BJ (cell line): ENCODE measurements at regions of chr2 and their contacts with region 1.

Region 1: GRCh38 chr2:75608684-75609333 is 37.8 kb upstream of the MRPL19 start:
- DNase-seq: no peak
- H3K4me3 ChIP-seq: no peak overlapping the region
- H3K27me3 ChIP-seq: peaks cover 1% of the 10 kb centered on the region
- CTCF ChIP-seq: peak; percentile 99

Region 2: DNA sequence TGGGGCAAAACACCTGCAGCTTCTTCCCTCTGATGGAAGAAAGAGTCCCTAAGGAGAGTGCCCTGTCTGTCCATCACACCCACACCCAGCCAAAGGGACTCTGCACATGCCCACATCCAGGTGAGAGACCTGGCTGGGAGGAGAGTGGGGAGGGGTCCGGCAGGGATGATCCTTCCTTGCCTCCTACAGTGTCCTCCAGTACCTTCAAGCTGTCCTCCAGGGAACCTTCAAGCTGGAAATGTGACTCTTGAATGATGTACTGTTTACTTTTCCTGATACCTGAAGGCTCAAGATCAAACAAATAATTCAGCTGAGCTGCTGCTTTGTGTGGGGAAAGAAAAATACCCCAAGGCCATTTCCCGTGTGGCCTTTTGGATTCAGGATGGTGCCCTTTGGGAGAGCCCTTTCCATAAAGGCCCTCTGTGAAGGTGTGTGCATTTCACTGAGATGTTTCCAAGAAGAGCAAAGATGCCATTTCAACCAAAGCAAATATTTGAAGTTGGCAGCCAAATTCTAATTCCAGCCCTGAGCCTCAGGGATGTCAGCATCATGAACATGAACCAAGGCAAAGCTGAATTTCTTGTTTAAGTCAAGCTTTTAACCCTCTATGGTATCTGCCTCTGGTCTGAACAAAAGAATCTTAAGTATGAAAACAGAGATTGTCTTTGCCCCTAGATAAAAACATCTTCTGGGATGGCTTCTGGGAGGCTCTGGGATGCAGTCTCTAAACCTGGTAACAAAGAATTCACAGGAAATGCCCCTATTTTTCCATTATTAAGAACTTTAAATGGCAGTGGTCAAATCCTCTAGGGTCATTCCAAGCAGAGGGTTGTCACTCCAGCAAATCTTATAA is 59.2 kb before region 1 on chr2:
- CTCF ChIA-PET with region 1: interaction called, 19 read pairs
- POLR2A ChIA-PET with region 1: no interaction called
- DNase-seq: no peak
- H3K4me3 ChIP-seq: no peak overlapping the region
- H3K27me3 ChIP-seq: no peaks in the 10 kb centered on the region
- CTCF ChIP-seq: no peak

Region 3: GRCh38 chr2:75570948-75571729 is 37.7 kb before region 1 on chr2:
- CTCF ChIA-PET with region 1: interaction called, 41 read pairs
- POLR2A ChIA-PET with region 1: no interaction called
- DNase-seq: no peak
- H3K4me3 ChIP-seq: no peak overlapping the region
- H3K27me3 ChIP-seq: no peaks in the 10 kb centered on the region
- CTCF ChIP-seq: no peak

Region 4: GRCh38 chr2:75619956-75620740 is 11.3 kb after region 1 on chr2:
- CTCF ChIA-PET with region 1: interaction called, 38 read pairs
- POLR2A ChIA-PET with region 1: no interaction called
- DNase-seq: no peak
- H3K4me3 ChIP-seq: no peak overlapping the region
- H3K27me3 ChIP-seq: peaks cover 9% of the 10 kb centered on the region
- CTCF ChIP-seq: no peak